HEK293 (cell line): ENCODE measurements at regions of chr1 and their contacts with region 1.

Region 1: DNA sequence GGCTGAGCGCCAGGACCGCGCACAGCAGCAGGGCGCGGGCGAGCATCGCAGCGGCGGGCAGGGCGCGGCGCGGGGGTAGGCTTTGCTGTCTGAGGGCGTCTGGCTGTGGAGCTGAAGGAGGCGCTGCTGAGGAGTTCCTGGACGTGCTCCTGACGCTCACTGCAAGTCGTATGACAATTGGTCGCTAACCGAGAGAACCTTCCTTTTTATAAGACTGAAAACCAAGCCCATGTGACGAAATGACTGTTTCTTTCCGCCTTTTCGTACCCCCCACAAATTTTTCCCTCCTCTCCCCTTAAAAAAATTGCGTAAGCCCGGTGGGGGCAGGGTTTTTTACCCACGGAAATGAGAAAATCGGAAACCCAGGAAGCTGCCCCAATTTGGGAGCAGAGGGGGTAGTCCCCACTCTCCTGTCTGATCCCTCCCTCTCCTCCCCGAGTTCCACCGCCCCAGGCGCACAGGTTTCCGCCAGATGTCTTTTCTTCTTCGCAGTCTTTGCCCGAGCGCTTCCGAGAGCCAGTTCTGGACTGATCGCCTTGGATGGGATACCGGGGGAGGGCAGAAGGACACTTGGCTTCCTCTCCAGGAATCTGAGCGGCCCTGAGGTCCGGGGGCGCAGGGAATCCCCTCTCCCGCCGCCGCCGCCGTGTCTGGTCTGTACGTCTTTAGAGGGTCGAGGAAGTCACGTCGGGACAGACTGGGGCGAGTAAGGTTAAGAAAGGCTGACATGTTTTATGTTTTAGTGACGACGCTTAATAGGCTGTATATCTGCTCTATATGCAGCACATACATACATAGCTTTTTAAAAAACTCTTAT is at the start of gene PTGS2:
- H3K4me3 ChIP-seq: peak within 1 kb of the TSS; percentile 62
- H3K27ac ChIP-seq: peak within 1 kb of the TSS; percentile 66
- H3K4me1 ChIP-seq: no peaks in the 10 kb centered on the region
- CTCF ChIP-seq: peak; percentile 57

Region 2: GRCh38 chr1:186611156-186611555 is 69.3 kb before region 1 on chr1:
- CTCF ChIA-PET with region 1: interaction called, 11 read pairs
- POLR2A ChIA-PET with region 1: no interaction called
- H3K4me3 ChIP-seq: no peak overlapping the region
- H3K27ac ChIP-seq: no peak overlapping the region
- H3K4me1 ChIP-seq: no peaks in the 10 kb centered on the region
- CTCF ChIP-seq: no peak

Region 3: DNA sequence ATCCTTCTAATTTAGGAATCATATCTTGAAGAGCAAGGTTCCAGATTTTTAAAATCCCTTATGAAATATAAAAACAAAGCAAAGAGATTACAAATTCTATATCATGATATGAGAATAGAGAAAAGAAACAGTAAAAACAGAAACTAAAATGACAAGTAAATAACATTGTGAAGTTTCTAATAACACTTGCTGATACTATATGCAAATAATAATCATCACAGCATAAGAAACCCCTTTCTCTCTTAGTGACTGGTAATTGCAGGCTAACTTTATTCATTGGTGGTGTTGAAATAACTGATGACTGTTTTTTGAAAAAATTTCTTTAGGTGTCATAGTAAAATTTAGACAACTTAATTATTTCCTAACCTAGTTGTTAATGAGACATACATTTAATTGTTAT is 429.9 kb after region 1 on chr1:
- CTCF ChIA-PET with region 1: no interaction called
- POLR2A ChIA-PET with region 1: no interaction called
- H3K4me3 ChIP-seq: no peak overlapping the region
- H3K27ac ChIP-seq: no peak overlapping the region
- H3K4me1 ChIP-seq: no peaks in the 10 kb centered on the region
- CTCF ChIP-seq: no peak